ENCODE measurements at regions of chr2 and their contacts with region 1.

Region 1: GRCh38 chr2:64865073-64865830 is 123.9 kb upstream of the SLC1A4 start:
- DNase-seq: peak; percentile 73 to 87 (median 80)
- H3K4me3 ChIP-seq: peak overlapping the region; percentile 56 to 81 (median 58)
- H3K27ac ChIP-seq: peak overlapping the region in 1 of 2 donors; percentile 73
- H3K4me1 ChIP-seq: peaks cover 0 to 6% (median 0%) of the 10 kb centered on the region in 3 donors
- H3K27me3 ChIP-seq: no peaks in the 10 kb centered on the region
- CTCF ChIP-seq: peak; percentile 84

Region 2: DNA sequence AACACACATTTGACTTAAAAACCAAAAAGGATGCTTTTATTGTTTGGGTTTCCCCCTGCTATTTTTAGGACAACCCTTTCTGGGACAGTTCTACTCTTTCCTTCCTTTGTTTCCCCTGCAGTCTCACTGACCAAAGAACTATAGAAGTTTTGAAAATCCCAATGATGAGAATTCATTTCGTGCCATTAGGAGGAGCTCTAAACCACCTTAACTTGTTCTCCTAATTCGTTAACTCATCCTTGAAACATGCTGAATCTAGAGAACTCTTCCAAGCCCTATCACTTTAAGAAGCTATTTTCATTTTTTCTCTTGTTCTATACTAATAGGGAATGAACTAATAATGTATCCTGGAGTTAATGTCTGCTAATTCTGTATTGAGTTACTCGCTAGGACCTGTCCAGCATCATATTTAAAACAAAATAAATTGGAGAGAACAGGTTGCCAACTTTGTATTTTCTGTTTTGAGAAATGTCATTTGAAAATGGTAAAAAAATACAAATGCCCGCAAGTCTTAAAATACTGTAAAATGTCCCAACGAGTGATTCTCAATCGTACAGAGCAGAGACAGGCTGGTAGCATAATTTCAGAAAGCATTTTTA is 278.3 kb before region 1 on chr2:
- intact Hi-C with region 1: loop called (anchors 5 kb)
- DNase-seq: peak in 2 of 5 donors; percentile 43 to 78
- H3K4me3 ChIP-seq: no peak overlapping the region
- H3K27ac ChIP-seq: no peak overlapping the region
- H3K4me1 ChIP-seq: peaks cover 0 to 3% (median 0%) of the 10 kb centered on the region in 3 donors
- H3K27me3 ChIP-seq: no peaks in the 10 kb centered on the region
- CTCF ChIP-seq: peak; percentile 46

Region 3: GRCh38 chr2:64644177-64645004 is 220.9 kb before region 1 on chr2:
- intact Hi-C with region 1: loop called (anchors 5 kb)
- DNase-seq: peak; percentile 92 to 98 (median 94)
- H3K4me3 ChIP-seq: peak overlapping the region; percentile 55 to 67 (median 67)
- H3K27ac ChIP-seq: peak overlapping the region; percentile 86 to 92
- H3K4me1 ChIP-seq: peaks cover 5 to 25% (median 23%) of the 10 kb centered on the region in 3 donors
- H3K27me3 ChIP-seq: no peaks in the 10 kb centered on the region
- CTCF ChIP-seq: no peak

Measured in kidney (tissue), 22 donors.